ENCODE measurements at regions of chr2 and their contacts with region 1.

Region 1: DNA sequence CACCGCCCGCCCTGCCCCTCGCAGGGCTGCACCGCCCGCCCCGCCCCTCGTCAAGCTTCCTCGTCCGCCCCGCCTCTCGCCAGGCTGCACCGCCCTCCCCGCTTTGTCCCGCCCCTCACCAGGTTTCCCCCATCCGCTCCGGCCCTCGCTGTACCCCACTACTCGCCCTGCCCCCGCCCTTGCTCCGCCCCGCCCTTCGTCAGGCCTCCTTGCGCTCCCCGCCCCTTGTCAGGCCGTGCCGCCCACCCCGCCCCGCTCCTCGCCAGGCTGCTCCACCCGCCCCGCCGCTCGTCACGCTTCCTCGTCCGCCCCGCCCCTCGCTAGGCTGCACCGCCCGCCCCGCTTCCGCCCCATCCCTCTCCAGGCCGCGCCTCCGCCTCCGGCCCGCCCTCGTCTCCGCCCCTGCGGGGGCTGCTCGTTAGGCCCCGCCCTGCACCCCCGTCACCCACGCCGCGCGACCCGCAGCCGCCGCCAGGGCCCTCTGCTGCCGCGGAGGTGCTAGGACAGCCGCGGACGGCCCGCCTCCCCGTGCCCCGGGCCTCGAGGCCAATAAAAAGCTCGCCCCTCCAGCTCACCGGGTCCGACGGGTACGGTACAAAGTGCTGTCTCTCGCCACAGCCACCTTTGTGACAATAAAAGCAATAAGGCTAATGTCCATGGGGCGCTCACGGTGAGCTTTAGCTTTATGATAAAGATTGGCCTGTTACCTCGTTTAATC is 574 bp upstream of the DNPEP start:
- DNase-seq: peak; percentile 99
- H3K4me3 ChIP-seq: peak overlapping the region in 1 of 3 donors; percentile 79
- H3K27ac ChIP-seq: peak overlapping the region; percentile 49 to 81 (median 51)
- H3K4me1 ChIP-seq: peaks cover 8 to 13% of the 10 kb centered on the region in 2 donors
- H3K27me3 ChIP-seq: no peaks in the 10 kb centered on the region
- CTCF ChIP-seq: peak; percentile 40 to 93 (median 64)
- POLR2A ChIP-seq: peak in 1 of 2 donors; percentile 34

Region 2: DNA sequence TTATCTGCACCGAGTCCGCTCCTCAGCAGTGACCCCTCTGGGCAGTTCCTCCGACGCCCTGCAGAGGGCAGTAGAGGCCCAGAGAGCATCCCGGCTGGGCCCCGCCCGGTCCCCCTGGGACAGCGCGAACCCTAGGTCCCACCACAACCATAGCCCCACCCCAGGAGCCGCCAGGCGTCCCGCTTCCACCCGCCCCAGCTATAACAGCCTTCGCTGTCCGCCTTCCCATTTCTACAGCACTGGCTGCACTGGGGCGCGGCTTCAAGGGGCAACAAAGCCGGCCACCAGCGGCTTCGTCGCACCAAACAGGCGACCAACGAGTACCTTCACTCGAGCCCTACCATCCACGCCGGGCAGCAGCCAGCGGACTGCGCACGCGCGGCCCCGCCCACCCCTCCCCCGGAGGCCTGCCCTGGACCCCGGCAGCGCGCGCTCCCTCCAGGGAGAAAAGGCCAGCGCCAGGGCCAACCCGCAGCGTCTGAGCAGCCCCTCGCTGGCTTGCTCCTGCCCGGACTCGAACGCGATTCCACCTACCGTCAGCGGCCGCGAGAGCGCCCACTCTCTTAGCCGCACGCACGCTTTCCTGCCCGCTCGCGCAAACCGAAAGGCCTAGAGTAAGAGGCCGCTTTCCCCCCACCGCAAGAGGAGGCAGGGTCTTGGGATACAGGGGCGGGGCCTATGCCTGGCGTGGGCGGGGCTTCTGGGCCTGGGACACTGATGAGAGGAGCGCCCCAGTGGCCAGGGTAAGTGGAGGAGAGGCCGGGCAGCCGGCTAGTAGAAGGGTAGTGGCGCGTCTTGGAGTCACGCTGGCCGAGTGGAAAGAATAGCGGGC is 227.9 kb before region 1 on chr2 and contains the start of gene NHEJ1:
- intact Hi-C with region 1: loop called (anchors 10 kb)
- DNase-seq: peak; percentile 96 to 97
- H3K4me3 ChIP-seq: peak within 1 kb of the TSS in 2 of 3 donors; percentile 40 to 50
- H3K27ac ChIP-seq: peak within 1 kb of the TSS; percentile 90 to 97 (median 93)
- H3K4me1 ChIP-seq: peaks cover 4 to 11% of the 10 kb centered on the region in 2 donors
- H3K27me3 ChIP-seq: no peaks in the 10 kb centered on the region
- CTCF ChIP-seq: peak; percentile 89 to 99 (median 96)
- POLR2A ChIP-seq: peak in 1 of 2 donors; percentile 72
- total RNA-seq, gene NHEJ1: 8.6 to 13.8 (median 11.9) TPM

Region 3: DNA sequence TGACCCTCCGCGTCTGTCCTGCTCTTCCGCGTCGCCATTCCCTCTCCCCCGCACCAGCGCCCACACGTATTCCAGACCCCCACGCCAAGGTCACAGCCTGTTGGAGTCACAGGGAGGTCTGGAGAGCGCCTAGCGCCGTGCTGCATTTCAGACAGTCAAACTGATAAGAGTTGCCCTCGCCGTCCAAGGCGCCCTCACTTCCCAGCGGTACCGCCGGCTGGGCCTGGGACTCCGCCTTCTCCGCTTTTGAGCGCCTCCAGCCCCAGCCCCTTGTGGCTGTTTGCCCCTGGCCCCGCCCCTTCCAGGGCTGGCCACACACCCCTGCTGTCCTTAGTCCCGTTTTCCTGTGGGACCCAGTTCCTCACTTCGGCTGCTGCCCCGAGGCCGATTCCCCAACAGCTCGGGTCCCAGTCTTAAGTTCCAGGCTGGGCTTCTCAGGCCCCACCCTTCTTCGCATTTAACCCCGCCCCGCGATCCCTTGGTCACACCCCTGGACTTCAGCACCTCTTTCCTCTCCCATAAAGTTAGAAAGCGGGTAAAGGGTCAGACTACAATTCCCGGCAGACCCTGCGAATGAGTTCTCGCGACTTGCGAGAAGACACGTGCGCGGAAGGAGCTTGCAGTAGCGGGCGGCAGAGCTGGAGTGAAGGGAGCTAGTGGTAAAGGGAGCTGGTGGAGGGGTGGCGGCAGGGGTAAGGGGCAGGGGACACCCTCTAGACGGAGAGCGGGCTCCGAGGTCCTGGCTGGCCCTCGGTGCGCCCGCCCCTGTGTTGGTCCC is 110.2 kb after region 1 on chr2 and contains the start of gene GMPPA:
- intact Hi-C with region 1: loop called (anchors 5 kb)
- DNase-seq: peak; percentile 96 to 97
- H3K4me3 ChIP-seq: peak within 1 kb of the TSS; percentile 36 to 73 (median 67)
- H3K27ac ChIP-seq: peak within 1 kb of the TSS; percentile 70 to 98 (median 91)
- H3K4me1 ChIP-seq: peaks cover 24 to 26% of the 10 kb centered on the region in 2 donors
- H3K27me3 ChIP-seq: no peaks in the 10 kb centered on the region
- CTCF ChIP-seq: peak in 2 of 6 experiments; percentile 8 to 22
- POLR2A ChIP-seq: peak in 1 of 2 donors; percentile 80
- total RNA-seq, gene GMPPA: 26.5 to 50.6 (median 42.6) TPM

Measured in thyroid gland (tissue), 4 donors.